Activated CD8-positive, alpha-beta memory T cell treated with anti-CD3 and anti-CD28 coated beads, Interleukin-2, amount 10 ng/mL, durations not matched to agents 7 days and 5 days (primary cell): ENCODE measurements at regions of chr20 and their contacts with region 1.

Region 1: GRCh38 chr20:57382027-57382503 is 9.1 kb upstream of the RBM38 start:
- DNase-seq: no peak
- ATAC-seq: no peak
- H3K4me3 Mint-ChIP-seq: no peak overlapping the region
- H3K27ac Mint-ChIP-seq: no peak overlapping the region
- H3K4me1 Mint-ChIP-seq: peaks cover 49% of the 10 kb centered on the region
- H3K27me3 Mint-ChIP-seq: no peaks in the 10 kb centered on the region

Region 2: GRCh38 chr20:57432874-57433491 is 50.9 kb after region 1 on chr20:
- CTCF ChIA-PET with region 1: interaction called, 26 read pairs
- DNase-seq: peak; percentile 91
- ATAC-seq: peak; percentile 93
- H3K4me3 Mint-ChIP-seq: no peak overlapping the region
- H3K27ac Mint-ChIP-seq: peak overlapping the region; percentile 86
- H3K4me1 Mint-ChIP-seq: peaks cover 54% of the 10 kb centered on the region
- H3K27me3 Mint-ChIP-seq: peaks cover 15% of the 10 kb centered on the region

Region 3: DNA sequence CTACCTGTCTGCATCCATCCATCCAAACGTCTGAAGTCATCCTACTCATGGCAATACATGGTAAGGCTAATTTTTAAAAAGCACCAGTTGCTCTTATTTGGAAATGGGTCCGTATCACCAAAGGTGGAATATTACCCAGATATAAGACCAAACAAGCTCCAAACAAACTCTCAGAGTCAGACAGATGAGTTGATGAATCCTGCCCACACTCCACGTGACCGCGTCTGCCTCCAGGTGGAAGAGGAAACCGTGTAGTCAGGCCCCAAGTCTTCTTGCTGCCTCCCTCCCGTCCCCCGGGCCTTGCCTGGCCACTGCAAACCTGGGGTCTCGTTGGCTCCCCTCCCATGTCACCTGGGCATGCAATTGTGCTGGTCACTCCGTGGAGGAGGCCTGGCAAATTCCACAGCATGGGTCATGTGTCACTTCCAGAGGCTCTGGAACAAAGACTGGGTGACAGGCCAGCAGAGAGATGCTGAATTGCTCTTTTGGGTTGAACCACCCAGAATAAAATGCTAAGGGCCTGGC is 111.1 kb after region 1 on chr20:
- CTCF ChIA-PET with region 1: interaction called, 27 read pairs
- DNase-seq: no peak
- ATAC-seq: no peak
- H3K4me3 Mint-ChIP-seq: no peak overlapping the region
- H3K27ac Mint-ChIP-seq: no peak overlapping the region
- H3K4me1 Mint-ChIP-seq: peaks cover 6% of the 10 kb centered on the region
- H3K27me3 Mint-ChIP-seq: peaks cover 35% of the 10 kb centered on the region

Region 4: GRCh38 chr20:57498425-57499400 is 116.6 kb after region 1 on chr20:
- CTCF ChIA-PET with region 1: interaction called, 27 read pairs
- DNase-seq: peak; percentile 50
- ATAC-seq: peak; percentile 85
- H3K4me3 Mint-ChIP-seq: no peak overlapping the region
- H3K27ac Mint-ChIP-seq: no peak overlapping the region
- H3K4me1 Mint-ChIP-seq: peaks cover 15% of the 10 kb centered on the region
- H3K27me3 Mint-ChIP-seq: peaks cover 75% of the 10 kb centered on the region